HEK293 (cell line): ENCODE measurements at regions of chr5 and their contacts with region 1.

Region 1: DNA sequence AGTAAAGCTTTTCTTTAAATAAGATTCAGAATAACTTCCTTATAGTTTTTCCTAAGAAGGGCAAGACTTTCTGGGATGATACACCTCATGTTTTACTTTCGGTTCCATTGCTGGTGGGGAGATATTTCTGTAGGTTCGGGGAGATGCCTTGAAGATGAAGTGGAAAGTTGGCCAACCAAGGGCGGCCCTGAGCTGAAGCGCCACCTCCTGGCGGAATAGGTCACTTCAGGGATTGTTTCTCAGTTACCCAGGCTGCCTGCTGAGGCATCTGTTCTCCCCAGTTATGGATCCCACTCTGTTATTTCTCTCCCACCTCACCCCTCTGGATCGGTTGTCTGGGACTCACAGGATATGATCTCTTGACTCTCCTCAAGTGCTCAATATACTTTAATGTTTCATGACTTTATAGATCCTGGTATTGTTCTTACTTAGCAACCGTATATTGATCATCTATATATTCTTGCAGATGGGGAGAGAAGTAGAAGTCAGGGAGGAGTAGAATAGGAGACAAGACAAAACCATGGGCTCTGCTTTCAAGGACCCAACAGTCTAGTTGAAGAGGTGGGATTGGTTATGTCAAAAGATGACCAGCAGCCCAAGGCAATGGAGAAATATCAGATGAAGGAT is 23.4 kb downstream of the MEGF10 start:
- H3K4me3 ChIP-seq: no peak overlapping the region
- H3K27ac ChIP-seq: no peak overlapping the region
- H3K4me1 ChIP-seq: no peaks in the 10 kb centered on the region
- CTCF ChIP-seq: no peak

Region 2: DNA sequence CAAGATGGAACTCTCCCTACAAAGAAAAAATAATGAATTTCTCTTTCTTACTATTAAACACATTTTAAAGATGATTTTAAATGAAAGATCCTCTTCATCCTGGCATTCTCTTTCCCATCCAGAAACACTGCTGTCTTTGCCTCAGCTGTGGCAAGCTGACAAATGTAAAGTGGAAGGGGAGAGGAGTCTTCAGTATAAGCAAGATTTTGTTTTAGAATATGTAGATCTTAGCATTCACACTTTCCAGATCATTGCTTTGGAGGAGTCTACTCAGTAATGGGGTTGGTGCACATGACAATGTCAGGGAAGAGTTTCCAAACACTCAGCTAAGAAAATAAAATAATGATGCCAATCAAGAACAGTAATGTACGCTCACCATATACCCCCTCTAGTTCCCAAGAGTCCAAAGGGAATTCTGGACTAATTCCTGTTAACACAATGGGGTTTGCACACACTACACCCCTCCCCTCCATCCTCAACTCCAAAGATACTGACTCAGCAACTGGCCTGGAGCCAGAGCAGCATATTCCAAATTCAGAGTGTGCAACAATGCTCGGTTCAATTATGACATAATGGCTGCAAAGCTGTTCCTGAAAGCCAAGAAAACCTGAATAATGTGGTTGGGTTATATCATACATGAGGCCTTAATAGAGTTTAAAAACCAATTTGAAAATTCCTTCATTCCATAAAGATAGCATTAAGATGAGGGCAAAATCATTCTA is 245.3 kb before region 1 on chr5:
- CTCF ChIA-PET with region 1: no interaction called
- POLR2A ChIA-PET with region 1: no interaction called
- H3K4me3 ChIP-seq: no peak overlapping the region
- H3K27ac ChIP-seq: no peak overlapping the region
- H3K4me1 ChIP-seq: 0 out of 2 replicates have a peak, but pooled peaks cover 2% of the 10 kb centered on the region
- CTCF ChIP-seq: no peak

Region 3: DNA sequence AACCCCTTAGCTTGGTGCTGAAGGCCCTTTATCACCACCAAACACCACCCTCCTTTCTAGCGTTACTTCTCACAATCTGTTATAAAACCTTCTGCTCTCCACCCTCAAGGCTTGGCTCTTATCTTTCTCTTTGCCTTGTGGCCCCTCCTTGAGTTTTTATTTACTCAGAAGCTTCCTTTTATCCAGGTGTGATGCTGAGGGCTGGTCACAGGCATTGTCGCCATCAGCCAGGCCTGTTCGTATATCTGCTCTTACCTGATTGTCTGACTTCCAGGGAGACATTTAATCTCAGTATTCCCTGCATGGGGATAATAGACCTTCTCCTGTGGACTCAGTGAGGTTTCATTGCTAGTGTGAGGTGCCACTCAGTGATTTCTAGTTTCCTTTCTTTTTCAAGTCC is 10.8 kb after region 1 on chr5:
- CTCF ChIA-PET with region 1: interaction called, 12 read pairs
- POLR2A ChIA-PET with region 1: no interaction called
- H3K4me3 ChIP-seq: no peak overlapping the region
- H3K27ac ChIP-seq: no peak overlapping the region
- H3K4me1 ChIP-seq: no peaks in the 10 kb centered on the region
- CTCF ChIP-seq: no peak